ENCODE measurements at regions of chr11 and their contacts with region 1.

Region 1: DNA sequence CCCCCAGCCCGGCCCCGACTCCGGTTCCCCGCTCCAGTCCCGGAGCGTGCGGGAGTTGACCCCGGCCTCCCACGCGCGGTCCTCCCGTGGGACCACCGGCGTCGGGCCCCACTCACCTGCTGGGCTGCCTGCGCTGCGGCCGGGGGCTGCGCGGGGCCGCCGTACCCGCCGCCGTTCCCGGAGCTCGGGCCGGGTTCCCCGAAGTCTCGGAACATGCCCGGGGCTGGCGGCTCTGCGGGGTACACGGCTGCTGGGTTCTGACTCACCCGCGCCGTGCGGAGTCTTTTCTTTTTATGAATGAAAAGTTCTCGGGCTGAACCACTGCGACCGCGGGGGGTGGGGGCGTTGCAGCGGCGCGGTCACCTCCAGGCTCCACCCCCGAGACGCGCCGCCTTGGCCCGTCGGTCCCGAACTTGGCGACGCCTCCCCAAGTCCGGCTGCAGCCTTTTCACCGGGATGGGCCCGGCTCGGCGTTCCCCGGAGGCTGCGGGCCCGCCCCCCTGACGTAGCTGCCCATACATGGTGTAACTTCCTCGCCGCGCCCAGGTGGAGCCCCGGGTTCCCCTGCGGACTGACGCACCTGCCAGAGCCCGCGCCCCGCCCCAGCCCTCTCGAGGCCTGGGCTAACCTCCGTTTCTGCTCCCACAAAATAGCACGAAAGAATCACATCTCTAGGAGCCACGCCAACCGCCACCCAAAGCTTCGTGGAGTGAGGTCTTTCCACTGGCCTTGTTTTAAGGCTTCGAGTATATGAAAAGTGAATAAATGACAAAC is at the start of gene FOSL1:
- DNase-seq: peak; percentile 83 to 97 (median 89)
- ATAC-seq: peak; percentile 95
- H3K4me3 ChIP-seq: peak within 1 kb of the TSS; percentile 51
- H3K4me3 Mint-ChIP-seq: peak within 1 kb of the TSS; percentile 64 to 81 (median 74)
- H3K27ac ChIP-seq: peak within 1 kb of the TSS; percentile 47
- H3K27ac Mint-ChIP-seq: peak within 1 kb of the TSS in 6 of 9 donors; percentile 43 to 88 (median 80)
- H3K4me1 ChIP-seq: peaks cover 17 to 19% of the 10 kb centered on the region in 2 donors
- H3K4me1 Mint-ChIP-seq: peaks cover 6 to 42% (median 10%) of the 10 kb centered on the region in 7 donors
- H3K27me3 ChIP-seq: peaks cover 0 to 6% of the 10 kb centered on the region in 2 donors
- H3K27me3 Mint-ChIP-seq: peaks cover 0 to 11% (median 3%) of the 10 kb centered on the region in 5 donors
- total RNA-seq, gene FOSL1: 2.8 to 25.7 (median 4.0) TPM in 3 of 5 experiments, not detected in the others

Region 2: DNA sequence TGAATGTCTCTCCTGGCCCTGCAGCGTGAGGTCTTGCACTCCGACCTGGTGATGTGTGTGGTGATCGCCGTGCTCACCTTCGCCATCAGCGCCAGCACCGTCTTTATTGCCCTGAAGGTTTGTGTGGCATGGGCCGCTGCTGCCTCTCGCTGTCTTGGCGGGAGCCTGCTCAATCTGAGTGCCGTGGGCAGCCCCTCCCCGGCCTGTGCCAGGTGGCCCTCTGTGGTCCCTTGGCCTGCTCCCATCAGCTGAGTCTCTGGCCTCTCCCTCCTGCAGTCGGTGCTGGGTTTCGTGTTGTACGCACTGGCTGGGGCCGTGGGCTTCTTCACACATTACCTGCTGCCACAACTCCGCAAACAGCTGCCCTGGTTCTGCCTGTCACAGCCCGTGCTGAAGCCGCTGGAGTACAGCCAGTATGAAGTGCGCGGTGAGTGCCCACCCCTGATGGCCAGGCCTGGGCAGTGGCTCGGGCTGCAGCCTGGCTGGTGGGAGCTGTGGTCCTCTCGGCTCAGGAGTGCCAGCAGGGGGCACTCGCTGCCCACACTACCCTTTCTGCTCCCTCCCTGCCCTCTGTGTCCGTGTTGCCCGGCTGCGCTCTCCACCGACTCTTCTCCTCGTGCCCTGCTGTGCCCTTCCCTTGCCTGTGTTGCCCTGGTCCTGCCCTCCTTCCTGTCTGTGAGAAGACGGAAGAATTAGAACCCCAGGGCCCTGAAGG is 274.5 kb before region 1 on chr11:
- CTCF ChIA-PET with region 1: no interaction called
- POLR2A ChIA-PET with region 1: no interaction called
- intact Hi-C with region 1: no loop called
- DNase-seq: peak in 8 of 9 donors; percentile 42 to 68 (median 54)
- ATAC-seq: peak; percentile 92
- H3K4me3 ChIP-seq: no peak overlapping the region
- H3K4me3 Mint-ChIP-seq: peak overlapping the region in 1 of 10 donors; percentile 41
- H3K27ac ChIP-seq: no peak overlapping the region
- H3K27ac Mint-ChIP-seq: peak overlapping the region in 4 of 9 donors; percentile 22 to 86 (median 68)
- H3K4me1 ChIP-seq: peaks cover 3 to 9% of the 10 kb centered on the region in 2 donors
- H3K4me1 Mint-ChIP-seq: peaks cover 4 to 13% (median 7%) of the 10 kb centered on the region in 7 donors
- H3K27me3 ChIP-seq: no peaks in the 10 kb centered on the region
- H3K27me3 Mint-ChIP-seq: no peaks in the 10 kb centered on the region

Region 3: DNA sequence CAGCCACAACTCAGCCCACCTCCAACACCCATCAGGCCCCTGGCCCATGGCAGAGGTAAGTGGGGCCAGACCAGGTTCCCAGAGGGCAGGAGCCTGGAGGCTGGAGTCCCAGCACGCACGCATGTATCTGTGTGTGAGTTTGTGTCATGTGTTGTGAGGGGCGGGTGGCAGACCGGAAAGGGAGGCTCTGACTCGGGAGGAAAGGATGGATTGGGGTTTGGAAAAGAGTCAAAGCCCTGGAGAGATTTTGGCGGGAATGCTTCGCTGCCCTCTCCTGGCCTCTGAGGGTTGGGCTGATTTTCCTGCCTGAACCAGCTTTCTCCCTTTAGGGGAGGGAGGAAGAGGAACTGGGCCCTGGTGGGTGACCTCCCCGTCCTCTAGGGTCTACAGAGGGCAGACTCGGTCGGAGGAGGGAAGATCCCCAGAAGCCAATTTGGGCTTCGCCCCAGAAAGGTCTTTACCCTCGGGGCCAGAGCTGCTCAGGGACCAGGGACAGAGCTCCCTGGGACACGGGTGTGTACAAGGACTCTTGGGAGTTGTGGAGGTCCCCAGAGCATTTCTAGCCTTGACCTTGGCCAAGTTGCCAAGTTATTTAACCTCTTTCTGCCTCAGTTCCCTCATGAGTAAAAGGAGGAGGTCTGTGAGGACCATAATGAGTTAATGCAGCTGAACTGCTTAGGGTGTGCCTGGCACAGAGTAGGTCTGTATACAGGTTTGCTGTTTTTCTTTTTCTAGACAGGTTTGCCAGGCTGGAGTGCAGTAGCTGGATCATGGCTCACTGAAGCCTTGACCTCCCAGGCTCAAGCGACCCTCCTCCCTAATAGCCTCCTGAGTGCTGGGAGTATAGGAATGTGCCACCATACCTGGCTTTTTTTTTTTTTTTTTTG is 11.6 kb after region 1 on chr11:
- CTCF ChIA-PET with region 1: interaction called, 3 read pairs
- POLR2A ChIA-PET with region 1: interaction called, 11 read pairs
- intact Hi-C with region 1: no loop called
- DNase-seq: no peak
- ATAC-seq: no peak
- H3K4me3 ChIP-seq: no peak overlapping the region
- H3K4me3 Mint-ChIP-seq: no peak overlapping the region
- H3K27ac ChIP-seq: no peak overlapping the region
- H3K27ac Mint-ChIP-seq: peak overlapping the region in 1 of 9 donors; percentile 5
- H3K4me1 ChIP-seq: peaks cover 2 to 5% of the 10 kb centered on the region in 2 donors
- H3K4me1 Mint-ChIP-seq: peaks cover 18 to 30% (median 21%) of the 10 kb centered on the region in 7 donors
- H3K27me3 ChIP-seq: no peaks in the 10 kb centered on the region
- H3K27me3 Mint-ChIP-seq: peaks cover 0 to 9% (median 0%) of the 10 kb centered on the region in 5 donors

Region 4: DNA sequence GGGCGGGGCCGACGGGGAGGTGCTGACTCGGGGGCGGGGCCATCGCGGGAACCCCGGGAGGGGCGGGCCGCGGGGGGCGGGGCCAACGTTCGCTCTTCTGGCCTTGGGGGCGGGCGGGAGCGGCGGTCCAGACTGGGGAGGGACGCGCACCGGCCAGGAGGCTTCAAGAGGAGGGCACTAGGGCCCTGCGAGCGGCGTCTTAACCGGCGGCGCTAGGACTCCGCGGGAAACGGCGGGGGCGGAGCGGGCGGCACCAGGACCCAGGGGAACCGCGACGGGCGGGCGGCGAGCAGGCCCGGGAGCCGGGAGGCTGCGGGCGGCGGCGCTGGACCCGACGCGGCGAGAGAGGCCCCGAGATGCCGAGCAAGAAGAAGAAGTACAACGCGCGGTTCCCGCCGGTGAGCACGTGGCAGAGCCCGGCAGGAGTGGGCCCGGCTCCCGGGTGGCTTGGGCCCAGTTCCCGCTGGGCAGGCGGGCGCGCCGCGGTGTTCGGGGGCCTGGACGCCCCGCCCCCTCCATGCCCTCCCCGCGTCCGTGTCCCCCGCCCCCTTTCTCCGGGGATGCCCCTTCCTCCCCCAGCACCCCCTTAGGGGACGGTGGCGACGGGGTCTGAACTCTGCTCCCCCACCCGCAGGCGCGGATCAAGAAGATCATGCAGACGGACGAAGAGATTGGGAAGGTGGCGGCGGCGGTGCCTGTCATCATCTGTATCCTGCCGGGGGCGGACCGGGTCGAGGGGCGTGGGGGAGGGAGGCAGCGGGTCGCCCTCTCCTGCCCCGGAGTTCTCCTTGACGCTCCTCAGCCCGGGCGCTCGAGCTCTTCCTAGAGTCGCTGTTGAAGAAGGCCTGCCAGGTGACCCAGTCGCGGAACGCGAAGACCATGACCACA is 19.1 kb after region 1 on chr11 and contains the start of gene DRAP1:
- CTCF ChIA-PET with region 1: interaction called, 3 read pairs
- POLR2A ChIA-PET with region 1: interaction called, 21 read pairs
- intact Hi-C with region 1: loop called (anchors 1 kb)
- DNase-seq: peak; percentile 95 to 98 (median 97)
- ATAC-seq: peak; percentile 93
- H3K4me3 ChIP-seq: peak within 1 kb of the TSS; percentile 83
- H3K4me3 Mint-ChIP-seq: peak within 1 kb of the TSS; percentile 86 to 96 (median 93)
- H3K27ac ChIP-seq: peak within 1 kb of the TSS; percentile 95
- H3K27ac Mint-ChIP-seq: peak within 1 kb of the TSS; percentile 79 to 96 (median 90)
- H3K4me1 ChIP-seq: peaks cover 26 to 28% of the 10 kb centered on the region in 2 donors
- H3K4me1 Mint-ChIP-seq: peaks cover 32 to 61% (median 36%) of the 10 kb centered on the region in 7 donors
- H3K27me3 ChIP-seq: no peaks in the 10 kb centered on the region
- H3K27me3 Mint-ChIP-seq: no peaks in the 10 kb centered on the region
- total RNA-seq, gene DRAP1: 72.6 to 166 (median 81.9) TPM

Region 5: DNA sequence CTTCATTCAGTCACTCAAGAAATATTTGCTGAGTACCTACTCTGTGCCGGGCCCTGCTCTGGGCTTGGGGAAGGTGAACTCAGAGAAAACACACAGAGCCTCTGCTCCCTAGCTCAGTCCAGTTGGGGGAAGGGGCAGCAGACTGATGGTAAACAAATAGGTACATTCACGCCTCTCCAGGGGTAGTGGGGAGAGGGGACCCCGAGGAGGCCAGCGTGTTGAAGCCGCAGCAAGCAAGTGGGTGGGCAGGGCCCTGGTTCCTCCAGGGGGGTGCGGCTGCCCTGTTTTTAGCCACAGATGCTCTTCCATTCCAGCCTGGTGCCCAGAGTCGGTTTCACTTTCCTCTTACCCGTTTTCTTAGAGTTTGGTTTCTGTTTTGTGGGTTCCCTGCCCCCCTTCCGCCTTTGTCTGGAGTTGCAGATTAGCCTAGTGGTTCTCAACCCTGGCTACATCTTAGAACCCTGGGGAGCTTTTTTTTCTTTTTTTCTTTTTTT is 27.6 kb after region 1 on chr11:
- CTCF ChIA-PET with region 1: no interaction called
- POLR2A ChIA-PET with region 1: interaction called, 3 read pairs
- intact Hi-C with region 1: loop called in 1 of 2 experiments (anchors 1 kb)
- DNase-seq: peak in 8 of 9 donors; percentile 64 to 86 (median 80)
- ATAC-seq: peak; percentile 96
- H3K4me3 ChIP-seq: peak overlapping the region; percentile 78
- H3K4me3 Mint-ChIP-seq: peak overlapping the region; percentile 74 to 89 (median 81)
- H3K27ac ChIP-seq: peak overlapping the region; percentile 81
- H3K27ac Mint-ChIP-seq: peak overlapping the region; percentile 92 to 98 (median 96)
- H3K4me1 ChIP-seq: peaks cover 20 to 30% of the 10 kb centered on the region in 2 donors
- H3K4me1 Mint-ChIP-seq: peaks cover 31 to 47% (median 36%) of the 10 kb centered on the region in 7 donors
- H3K27me3 ChIP-seq: no peaks in the 10 kb centered on the region
- H3K27me3 Mint-ChIP-seq: no peaks in the 10 kb centered on the region

Region 6: DNA sequence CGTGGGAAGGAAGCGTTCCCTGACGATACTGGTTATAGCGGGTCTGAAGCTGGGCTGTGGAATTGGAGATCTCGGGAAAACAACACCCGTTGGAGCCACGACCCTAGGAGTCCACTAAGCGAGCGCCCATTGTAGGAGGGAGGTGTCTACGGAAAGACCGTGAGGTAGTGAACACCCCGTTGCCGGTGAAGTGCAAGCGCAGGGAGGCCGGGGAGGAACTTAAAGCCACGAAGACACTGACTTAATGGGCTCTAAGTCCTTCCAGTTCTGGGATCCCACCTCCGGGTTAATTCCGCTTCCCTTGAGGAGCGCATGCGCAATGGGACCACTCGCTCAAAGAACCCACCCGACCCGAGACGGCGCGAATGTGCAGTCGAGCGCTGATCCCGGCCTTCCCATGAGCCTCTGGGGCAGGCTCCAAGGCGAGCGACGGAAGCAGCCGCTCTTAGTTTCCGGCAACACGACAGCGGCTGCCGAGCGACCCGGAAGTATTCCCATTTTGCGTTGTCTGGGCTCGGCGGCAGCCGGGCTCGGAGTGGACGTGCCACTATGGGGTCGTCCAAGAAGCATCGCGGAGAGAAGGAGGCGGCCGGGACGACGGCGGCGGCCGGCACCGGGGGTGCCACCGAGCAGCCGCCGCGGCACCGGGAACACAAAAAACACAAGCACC is 61.1 kb after region 1 on chr11 and contains the start of gene SART1:
- CTCF ChIA-PET with region 1: interaction called, 3 read pairs
- POLR2A ChIA-PET with region 1: interaction called, 4 read pairs
- intact Hi-C with region 1: loop called in 1 of 2 experiments (anchors 1 kb)
- DNase-seq: peak; percentile 81 to 97 (median 94)
- ATAC-seq: peak; percentile 96
- H3K4me3 ChIP-seq: peak within 1 kb of the TSS; percentile 83
- H3K4me3 Mint-ChIP-seq: peak within 1 kb of the TSS; percentile 93 to 99 (median 98)
- H3K27ac ChIP-seq: peak within 1 kb of the TSS; percentile 96
- H3K27ac Mint-ChIP-seq: peak within 1 kb of the TSS; percentile 96 to 99 (median 98)
- H3K4me1 ChIP-seq: peaks cover 27 to 38% of the 10 kb centered on the region in 2 donors
- H3K4me1 Mint-ChIP-seq: peaks cover 23 to 64% (median 54%) of the 10 kb centered on the region in 7 donors
- H3K27me3 ChIP-seq: no peaks in the 10 kb centered on the region
- H3K27me3 Mint-ChIP-seq: no peaks in the 10 kb centered on the region
- total RNA-seq, gene SART1: 65.9 to 102 (median 90.8) TPM

Region 7: DNA sequence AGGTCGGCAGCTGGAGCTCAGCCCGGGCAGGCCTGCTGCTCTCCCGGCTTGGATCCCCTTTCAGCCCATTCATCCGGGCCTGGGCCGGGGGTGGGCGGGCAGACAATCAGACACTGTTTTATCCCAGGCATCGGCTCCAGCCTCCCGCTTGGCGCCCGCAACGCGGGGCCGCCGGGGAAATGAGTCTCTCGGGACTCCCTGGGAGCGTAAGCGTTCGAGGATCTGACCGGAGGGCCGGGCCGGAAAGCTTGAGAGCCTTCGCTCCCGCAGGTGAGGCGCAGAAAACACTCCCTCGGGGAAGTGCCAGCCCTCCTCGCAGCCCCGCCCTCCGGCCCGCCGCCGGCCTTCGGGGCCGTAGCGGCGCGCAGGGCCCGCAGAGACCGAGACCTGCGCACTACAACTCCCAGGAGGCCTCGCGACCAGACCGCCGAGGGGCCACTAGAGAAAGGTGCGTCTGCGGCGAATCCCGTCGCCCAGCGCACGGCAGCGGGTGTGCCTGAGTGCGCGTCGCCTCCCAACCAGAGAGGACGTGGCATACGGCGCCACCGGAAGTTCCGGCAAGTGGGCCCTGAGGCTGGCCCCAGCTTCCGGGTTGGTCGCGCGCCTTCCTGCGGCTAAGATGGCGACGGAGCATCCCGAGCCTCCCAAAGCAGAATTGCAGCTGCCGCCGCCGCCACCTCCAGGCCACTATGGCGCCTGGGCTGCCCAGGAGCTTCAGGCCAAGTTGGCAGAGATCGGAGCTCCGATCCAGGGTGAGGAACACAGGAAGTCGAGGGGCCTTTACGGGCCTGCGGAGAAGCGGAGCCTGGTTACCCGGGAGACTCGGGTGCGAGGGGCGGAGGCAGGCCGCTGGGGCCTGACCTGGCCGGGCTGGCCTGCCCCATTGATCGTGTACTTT is 151.7 kb after region 1 on chr11 and contains the start of gene SF3B2:
- CTCF ChIA-PET with region 1: no interaction called
- POLR2A ChIA-PET with region 1: no interaction called
- intact Hi-C with region 1: loop called in 1 of 2 experiments (anchors 10 kb)
- DNase-seq: peak; percentile 81 to 94 (median 93)
- ATAC-seq: peak; percentile 99
- H3K4me3 ChIP-seq: peak within 1 kb of the TSS; percentile 88
- H3K4me3 Mint-ChIP-seq: peak within 1 kb of the TSS; percentile 95 to 100 (median 98)
- H3K27ac ChIP-seq: peak within 1 kb of the TSS; percentile 93
- H3K27ac Mint-ChIP-seq: peak within 1 kb of the TSS; percentile 95 to 99 (median 98)
- H3K4me1 ChIP-seq: peaks cover 14 to 18% of the 10 kb centered on the region in 2 donors
- H3K4me1 Mint-ChIP-seq: peaks cover 17 to 44% (median 38%) of the 10 kb centered on the region in 7 donors
- H3K27me3 ChIP-seq: no peaks in the 10 kb centered on the region
- H3K27me3 Mint-ChIP-seq: peaks cover 0 to 9% (median 0%) of the 10 kb centered on the region in 5 donors
- total RNA-seq, gene SF3B2: 163 to 248 (median 206) TPM

Region 8: DNA sequence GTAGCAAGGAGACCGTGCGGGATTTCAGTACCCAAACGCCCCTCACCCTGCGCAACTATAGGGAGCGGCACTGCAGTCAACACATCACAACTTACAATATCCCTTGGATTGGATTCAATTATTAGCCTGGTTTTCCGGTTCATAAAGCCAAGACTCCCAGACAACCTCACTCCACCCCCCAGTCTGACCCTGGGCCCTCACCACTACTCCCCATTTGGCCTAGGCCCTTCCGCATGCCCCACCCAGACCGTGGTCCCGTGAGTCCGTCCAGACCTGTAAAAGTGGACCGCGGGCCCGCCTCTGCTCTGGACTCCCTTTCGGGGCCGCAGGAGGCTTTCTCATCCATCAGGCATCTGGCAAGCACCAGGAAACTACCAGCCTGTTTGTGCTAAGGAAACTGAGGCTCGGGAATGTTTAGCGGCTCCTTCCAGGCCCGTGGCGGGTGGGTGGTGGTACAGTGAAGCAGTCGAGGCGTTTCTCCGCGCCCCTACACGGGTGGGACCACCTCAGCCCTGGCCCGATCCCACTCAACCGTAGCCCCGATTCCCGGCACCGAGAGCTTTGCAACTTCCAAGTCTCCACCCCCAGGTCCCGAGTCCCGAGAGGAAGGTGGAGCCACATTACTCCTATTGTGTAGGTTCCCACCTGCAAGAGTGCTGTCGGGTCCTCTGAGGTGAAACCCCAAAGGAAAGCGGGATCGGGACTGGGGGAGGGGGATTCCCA is 579.2 kb after region 1 on chr11:
- CTCF ChIA-PET with region 1: no interaction called
- POLR2A ChIA-PET with region 1: no interaction called
- intact Hi-C with region 1: no loop called
- DNase-seq: no peak
- ATAC-seq: no peak
- H3K4me3 ChIP-seq: peak overlapping the region; percentile 86
- H3K4me3 Mint-ChIP-seq: peak overlapping the region; percentile 86 to 92 (median 90)
- H3K27ac ChIP-seq: peak overlapping the region; percentile 90
- H3K27ac Mint-ChIP-seq: peak overlapping the region; percentile 75 to 91 (median 88)
- H3K4me1 ChIP-seq: peaks cover 9 to 14% of the 10 kb centered on the region in 2 donors
- H3K4me1 Mint-ChIP-seq: peaks cover 9 to 37% (median 17%) of the 10 kb centered on the region in 7 donors
- H3K27me3 ChIP-seq: no peaks in the 10 kb centered on the region
- H3K27me3 Mint-ChIP-seq: no peaks in the 10 kb centered on the region